Common myeloid progenitor, CD34-positive (primary cell): ENCODE measurements at regions of chr17 and their contacts with region 1.

Region 1: DNA sequence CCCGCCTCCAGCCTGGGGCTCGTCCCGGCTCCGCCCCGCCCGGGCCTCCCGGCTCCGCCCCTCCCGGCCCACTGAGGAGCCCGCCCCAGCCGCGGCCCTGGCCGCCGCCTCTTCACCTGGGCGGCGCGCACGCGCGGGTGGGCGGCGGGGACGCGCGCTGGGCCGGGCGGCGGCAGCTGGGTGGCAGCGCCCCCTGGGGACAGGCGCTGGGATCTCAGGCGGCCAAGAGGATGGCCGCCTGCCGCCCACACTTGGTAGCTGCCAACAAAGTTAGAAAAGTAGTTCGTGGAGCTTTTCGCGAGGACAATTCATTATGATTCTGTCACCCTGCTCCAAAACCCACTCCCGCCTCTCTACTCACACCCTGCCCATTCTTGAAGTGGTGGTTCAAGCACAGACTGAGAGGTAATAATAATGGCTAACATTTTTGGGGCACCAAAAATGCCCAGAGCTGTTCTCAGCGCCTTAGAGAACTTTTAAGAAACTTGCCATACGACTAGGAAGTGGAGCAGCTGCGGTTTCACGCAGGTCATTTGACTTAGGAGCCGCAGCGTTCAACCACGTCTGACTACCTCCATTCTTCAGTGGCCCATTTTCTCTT is 340 bp upstream of the MYO1D start:
- DNase-seq: peak; percentile 84 to 92 (median 92)
- H3K4me3 ChIP-seq: peak overlapping the region; percentile 65 to 92 (median 76)
- H3K27ac ChIP-seq: no peak overlapping the region
- H3K4me1 ChIP-seq: peaks cover 4 to 23% (median 13%) of the 10 kb centered on the region in 4 experiments
- H3K27me3 ChIP-seq: no peaks in the 10 kb centered on the region

Region 2: GRCh38 chr17:32673964-32674363 is 203.3 kb before region 1 on chr17:
- CTCF ChIA-PET with region 1: no interaction called
- POLR2A ChIA-PET with region 1: no interaction called
- DNase-seq: no peak
- H3K4me3 ChIP-seq: no peak overlapping the region
- H3K27ac ChIP-seq: no peak overlapping the region
- H3K4me1 ChIP-seq: peaks cover 0 to 14% (median 8%) of the 10 kb centered on the region in 4 experiments
- H3K27me3 ChIP-seq: no peaks in the 10 kb centered on the region

Region 3: DNA sequence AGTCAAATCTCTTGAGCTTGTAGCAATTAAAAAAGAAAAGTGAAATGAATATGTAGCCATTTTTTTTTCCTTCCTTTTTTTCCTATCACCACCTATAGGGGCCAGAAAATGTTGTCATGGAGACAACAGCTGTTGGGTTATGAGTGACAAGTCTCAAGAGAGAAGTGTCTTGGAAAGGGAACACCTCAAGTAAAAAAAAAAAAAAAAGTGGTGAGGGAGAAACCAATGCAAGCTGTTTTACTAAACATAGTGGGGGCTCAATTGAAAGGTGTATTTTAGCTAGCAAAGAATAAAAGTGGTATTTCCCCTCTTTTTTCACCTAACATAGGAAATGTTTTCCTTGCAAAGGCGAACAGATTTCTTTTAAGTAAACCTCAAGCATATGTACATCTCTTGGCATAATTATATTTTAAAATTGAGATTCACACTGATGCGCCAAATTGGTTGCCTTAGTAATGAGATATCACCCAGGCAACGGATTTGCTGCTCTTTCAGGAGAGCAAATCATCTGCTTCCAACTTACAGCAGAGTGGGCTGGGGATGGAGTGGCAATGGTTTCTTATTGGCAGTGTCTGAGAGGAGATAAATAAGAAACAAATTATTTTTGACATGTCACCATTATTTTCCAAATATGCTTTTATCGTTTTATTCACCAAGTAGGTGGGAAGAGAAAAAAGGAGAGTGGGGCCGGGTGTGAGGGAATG is 183.9 kb before region 1 on chr17:
- CTCF ChIA-PET with region 1: no interaction called
- POLR2A ChIA-PET with region 1: no interaction called
- DNase-seq: peak in 1 of 3 donors; percentile 6
- H3K4me3 ChIP-seq: no peak overlapping the region
- H3K27ac ChIP-seq: no peak overlapping the region
- H3K4me1 ChIP-seq: no peaks in the 10 kb centered on the region
- H3K27me3 ChIP-seq: no peaks in the 10 kb centered on the region

Region 4: GRCh38 chr17:32909787-32910369 is 32.6 kb after region 1 on chr17:
- CTCF ChIA-PET with region 1: interaction called, 24 read pairs
- POLR2A ChIA-PET with region 1: no interaction called
- DNase-seq: peak; percentile 78 to 89 (median 84)
- H3K4me3 ChIP-seq: no peak overlapping the region
- H3K27ac ChIP-seq: no peak overlapping the region
- H3K4me1 ChIP-seq: peaks cover 0 to 3% (median 0%) of the 10 kb centered on the region in 4 experiments
- H3K27me3 ChIP-seq: no peaks in the 10 kb centered on the region

Region 5: GRCh38 chr17:32936894-32937500 is 59.7 kb after region 1 on chr17:
- CTCF ChIA-PET with region 1: interaction called, 10 read pairs
- POLR2A ChIA-PET with region 1: no interaction called
- DNase-seq: peak; percentile 74 to 86 (median 86)
- H3K4me3 ChIP-seq: peak overlapping the region in 2 of 7 experiments; percentile 27 to 45
- H3K27ac ChIP-seq: no peak overlapping the region
- H3K4me1 ChIP-seq: peaks cover 0 to 22% (median 13%) of the 10 kb centered on the region in 4 experiments
- H3K27me3 ChIP-seq: peaks cover 0 to 2% (median 0%) of the 10 kb centered on the region in 5 experiments